Vagina (tissue), 2 donors: ENCODE measurements at regions of chr16 and their contacts with region 1.

Region 1: GRCh38 chr16:30698139-30698815 is 694 bp upstream of the SRCAP start:
- DNase-seq: peak; percentile 97 to 98
- H3K4me3 ChIP-seq: peak overlapping the region; percentile 98 to 100
- H3K27ac ChIP-seq: peak overlapping the region; percentile 100
- H3K4me1 ChIP-seq: peaks cover 25% of the 10 kb centered on the region
- H3K27me3 ChIP-seq: no peaks in the 10 kb centered on the region
- CTCF ChIP-seq: no peak
- POLR2A ChIP-seq: peak in 1 of 2 donors; percentile 53

Region 2: GRCh38 chr16:30657866-30658730 is 40.2 kb before region 1 on chr16 and contains the start of gene FBRS:
- intact Hi-C with region 1: loop called (anchors 2 kb)
- DNase-seq: peak; percentile 100
- H3K4me3 ChIP-seq: peak within 1 kb of the TSS; percentile 83 to 88
- H3K27ac ChIP-seq: peak within 1 kb of the TSS; percentile 99
- H3K4me1 ChIP-seq: peaks cover 44% of the 10 kb centered on the region
- H3K27me3 ChIP-seq: no peaks in the 10 kb centered on the region
- CTCF ChIP-seq: peak; percentile 43 to 69 (median 52)
- POLR2A ChIP-seq: peak in 1 of 2 donors; percentile 92
- total RNA-seq, gene FBRS: 28.7 TPM

Region 3: DNA sequence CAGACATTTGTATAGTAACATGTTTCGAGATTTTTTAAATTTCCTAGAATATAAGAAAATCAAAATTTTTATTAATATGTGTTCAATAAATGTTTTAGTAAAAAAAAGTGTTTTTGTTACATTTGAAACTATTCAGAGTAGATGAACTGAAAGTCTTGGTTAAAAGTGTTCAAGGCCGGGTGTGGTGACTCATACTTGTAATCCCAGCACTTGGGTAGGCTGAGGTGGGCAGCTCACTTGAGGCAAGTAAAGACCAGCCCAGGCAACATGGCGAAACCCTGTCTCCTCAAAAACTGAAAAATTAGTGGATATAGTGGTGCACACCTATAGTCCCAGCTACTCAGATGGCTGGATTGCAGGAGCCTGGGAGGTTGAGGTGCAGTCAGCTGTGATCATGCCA is 33.1 kb after region 1 on chr16:
- intact Hi-C with region 1: no loop called
- DNase-seq: no peak
- H3K4me3 ChIP-seq: no peak overlapping the region
- H3K27ac ChIP-seq: no peak overlapping the region
- H3K4me1 ChIP-seq: no peaks in the 10 kb centered on the region
- H3K27me3 ChIP-seq: no peaks in the 10 kb centered on the region
- CTCF ChIP-seq: no peak
- POLR2A ChIP-seq: no peak

Region 4: GRCh38 chr16:30761928-30762810 is 63.9 kb after region 1 on chr16 and contains the starts of genes CFAP119 and RNF40:
- intact Hi-C with region 1: loop called (anchors 5 kb)
- DNase-seq: peak; percentile 98
- H3K4me3 ChIP-seq: peak within 1 kb of the TSS; percentile 74 to 98
- H3K27ac ChIP-seq: peak within 1 kb of the TSS; percentile 98
- H3K4me1 ChIP-seq: peaks cover 37% of the 10 kb centered on the region
- H3K27me3 ChIP-seq: no peaks in the 10 kb centered on the region
- CTCF ChIP-seq: no peak
- POLR2A ChIP-seq: peak in 1 of 2 donors; percentile 78
- total RNA-seq, gene CFAP119: 1.7 TPM
- total RNA-seq, gene RNF40: 60.9 TPM

Region 5: DNA sequence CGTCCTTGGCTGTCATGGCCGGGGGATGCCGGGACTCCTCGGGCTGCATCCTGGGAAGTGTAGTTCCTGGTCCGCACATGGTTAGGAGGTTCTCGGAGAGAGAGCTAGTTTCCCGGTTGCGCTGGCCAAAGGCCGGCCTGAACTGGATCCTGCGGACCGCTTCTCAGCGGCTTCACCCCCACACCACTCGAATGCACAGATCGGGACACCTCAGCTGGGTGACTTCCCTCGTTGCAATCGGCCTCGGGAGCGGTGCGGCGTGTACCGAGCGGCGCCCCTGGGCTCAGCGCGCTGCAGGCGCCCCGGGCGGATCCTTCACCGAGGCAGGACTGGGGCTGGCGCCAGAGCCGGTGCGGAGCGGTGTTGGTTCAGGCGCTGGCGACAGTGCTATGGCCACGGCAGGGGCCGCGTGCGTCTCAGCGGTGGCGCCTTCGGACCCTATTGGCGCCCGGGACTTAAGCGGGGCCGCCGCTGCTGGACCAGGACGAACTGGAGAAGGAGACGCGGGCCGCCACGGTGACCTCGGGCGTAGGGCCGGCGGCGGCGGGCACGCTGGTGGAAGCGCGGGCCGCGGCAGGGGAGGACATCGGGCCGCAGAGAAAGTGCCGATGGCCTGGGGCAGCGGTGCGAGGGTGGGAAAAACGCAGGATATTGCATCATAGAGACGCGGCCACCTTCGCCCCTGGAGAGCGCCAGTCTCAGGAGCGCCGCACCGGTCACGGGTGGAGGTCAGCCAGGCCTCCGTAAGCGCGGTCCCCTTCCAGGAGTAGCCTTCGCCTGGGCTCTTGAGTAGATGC is 77.3 kb after region 1 on chr16:
- intact Hi-C with region 1: no loop called
- DNase-seq: no peak
- H3K4me3 ChIP-seq: peak overlapping the region; percentile 69 to 76
- H3K27ac ChIP-seq: peak overlapping the region; percentile 74
- H3K4me1 ChIP-seq: peaks cover 29% of the 10 kb centered on the region
- H3K27me3 ChIP-seq: no peaks in the 10 kb centered on the region
- CTCF ChIP-seq: no peak
- POLR2A ChIP-seq: no peak